IMR-90 (cell line): ENCODE measurements at regions of chr12 and their contacts with region 1.

Region 1: DNA sequence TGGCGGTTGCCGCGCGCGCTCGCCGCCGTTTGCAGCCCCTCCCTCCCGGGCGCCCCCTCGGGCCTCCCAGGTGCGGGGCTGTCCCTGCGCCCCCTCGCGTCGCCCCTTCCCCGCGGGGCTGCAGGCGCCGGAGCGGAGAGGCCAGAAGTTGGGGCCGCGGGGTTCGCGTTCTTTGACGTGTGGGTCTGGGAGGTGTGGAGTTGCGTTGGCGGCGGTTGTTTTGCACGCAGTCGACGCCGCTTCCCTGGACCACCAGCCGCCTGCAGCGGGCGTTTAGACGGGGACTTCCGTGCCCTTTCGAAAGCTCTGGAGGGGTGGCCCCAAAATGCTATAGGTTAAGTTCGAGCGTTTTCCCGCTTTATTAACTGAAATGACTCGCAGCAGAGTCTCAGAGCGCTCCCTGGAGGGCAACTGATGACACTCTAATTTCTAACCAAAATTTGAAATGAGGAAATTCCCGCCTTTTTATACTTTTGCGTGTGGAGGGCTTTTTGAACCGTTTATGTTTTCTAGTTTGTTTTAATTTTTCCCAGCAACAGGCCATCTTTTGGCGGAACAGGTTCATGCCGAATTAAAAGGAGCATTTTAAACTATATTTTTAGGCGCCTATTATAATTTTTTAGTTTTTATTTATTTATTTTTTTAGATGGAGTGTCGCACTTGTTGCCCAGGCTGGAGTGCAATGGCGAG is 939 bp downstream of the TMPO start:
- DNase-seq: peak; percentile 81
- ATAC-seq: peak; percentile 49
- H3K4me3 ChIP-seq: peak overlapping the region; percentile 93
- H3K27ac ChIP-seq: peak overlapping the region; percentile 84; the same call in 1 of the 2 replicates
- H3K4me1 ChIP-seq: no peaks in the 10 kb centered on the region
- H3K27me3 ChIP-seq: no peaks in the 10 kb centered on the region
- CTCF ChIP-seq: peak; percentile 82
- POLR2A ChIP-seq: peak; percentile 36; the same call in 1 of the 2 replicates
- RAD21 ChIP-seq: peak; percentile 80

Region 2: DNA sequence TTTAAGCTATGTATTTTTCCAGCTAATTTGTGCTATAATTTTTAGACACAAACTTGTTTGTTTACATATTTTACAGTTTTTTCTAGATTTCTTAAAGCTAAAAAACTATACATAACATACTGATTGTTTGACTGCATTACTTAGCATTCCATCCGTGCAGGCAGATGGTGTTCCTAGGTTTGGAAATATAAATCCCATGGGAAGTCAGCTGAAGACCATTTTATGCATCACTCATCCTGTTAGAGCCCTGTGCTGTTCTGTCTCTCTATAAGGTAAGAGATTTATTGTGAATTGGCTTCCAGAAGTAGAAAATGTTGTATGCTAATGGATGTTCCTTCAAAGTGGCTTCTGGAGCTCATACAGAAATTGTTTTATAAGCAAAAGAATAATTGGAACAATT is 1022.6 kb before region 1 on chr12:
- CTCF ChIA-PET with region 1: no interaction called
- POLR2A ChIA-PET with region 1: no interaction called
- dilution Hi-C with region 1: no loop called
- in situ Hi-C with region 1: no loop called
- intact Hi-C with region 1: no loop called
- DNase-seq: no peak
- ATAC-seq: no peak
- H3K4me3 ChIP-seq: no peak overlapping the region
- H3K27ac ChIP-seq: no peak overlapping the region
- H3K4me1 ChIP-seq: no peaks in the 10 kb centered on the region
- H3K27me3 ChIP-seq: no peaks in the 10 kb centered on the region
- CTCF ChIP-seq: no peak
- POLR2A ChIP-seq: no peak
- RAD21 ChIP-seq: no peak

Region 3: GRCh38 chr12:98424726-98425401 is 91.5 kb before region 1 on chr12:
- CTCF ChIA-PET with region 1: interaction called, 7 read pairs
- POLR2A ChIA-PET with region 1: no interaction called
- dilution Hi-C with region 1: no loop called
- in situ Hi-C with region 1: loop called (anchors 10 kb)
- intact Hi-C with region 1: loop called (anchors 1 kb)
- DNase-seq: peak; percentile 73
- ATAC-seq: peak; percentile 94
- H3K4me3 ChIP-seq: no peak overlapping the region
- H3K27ac ChIP-seq: no peak overlapping the region
- H3K4me1 ChIP-seq: peaks cover 2% of the 10 kb centered on the region; the same call in 1 of the 2 replicates
- H3K27me3 ChIP-seq: no peaks in the 10 kb centered on the region; the same call in 1 of the 2 replicates
- CTCF ChIP-seq: peak; percentile 75
- POLR2A ChIP-seq: no peak
- RAD21 ChIP-seq: peak; percentile 63

Region 4: GRCh38 chr12:98490501-98491453 is 25.6 kb before region 1 on chr12:
- CTCF ChIA-PET with region 1: interaction called, 6 read pairs
- POLR2A ChIA-PET with region 1: no interaction called
- dilution Hi-C with region 1: no loop called
- in situ Hi-C with region 1: no loop called
- intact Hi-C with region 1: loop called (anchors 1 kb)
- DNase-seq: peak; percentile 90
- ATAC-seq: peak; percentile 100
- H3K4me3 ChIP-seq: no peak overlapping the region
- H3K27ac ChIP-seq: peak overlapping the region; percentile 87
- H3K4me1 ChIP-seq: no peaks in the 10 kb centered on the region
- H3K27me3 ChIP-seq: no peaks in the 10 kb centered on the region
- CTCF ChIP-seq: peak; percentile 93
- POLR2A ChIP-seq: no peak
- RAD21 ChIP-seq: peak; percentile 68

Region 5: GRCh38 chr12:98503592-98504367 is 12.5 kb before region 1 on chr12:
- CTCF ChIA-PET with region 1: no interaction called
- POLR2A ChIA-PET with region 1: no interaction called
- dilution Hi-C with region 1: no loop called
- in situ Hi-C with region 1: no loop called
- intact Hi-C with region 1: loop called (anchors 1 kb)
- DNase-seq: peak; percentile 89
- ATAC-seq: peak; percentile 90
- H3K4me3 ChIP-seq: peak overlapping the region; percentile 72
- H3K27ac ChIP-seq: peak overlapping the region; percentile 93
- H3K4me1 ChIP-seq: no peaks in the 10 kb centered on the region
- H3K27me3 ChIP-seq: no peaks in the 10 kb centered on the region
- CTCF ChIP-seq: no peak
- POLR2A ChIP-seq: no peak
- RAD21 ChIP-seq: no peak

Region 6: GRCh38 chr12:98644711-98645402 is 128.5 kb after region 1 on chr12 and contains the starts of genes APAF1 and IKBIP:
- CTCF ChIA-PET with region 1: no interaction called
- POLR2A ChIA-PET with region 1: no interaction called
- dilution Hi-C with region 1: no loop called
- in situ Hi-C with region 1: no loop called
- intact Hi-C with region 1: loop called (anchors 10 kb)
- DNase-seq: peak; percentile 94
- ATAC-seq: peak; percentile 96
- H3K4me3 ChIP-seq: peak within 1 kb of the TSS; percentile 67
- H3K27ac ChIP-seq: peak within 1 kb of the TSS; percentile 69
- H3K4me1 ChIP-seq: no peaks in the 10 kb centered on the region; the same call in 1 of the 2 replicates
- H3K27me3 ChIP-seq: no peaks in the 10 kb centered on the region
- CTCF ChIP-seq: no peak
- POLR2A ChIP-seq: peak; percentile 86
- RAD21 ChIP-seq: no peak
- total RNA-seq, gene APAF1: 32.8 and 42.2 TPM in 2 replicates
- total RNA-seq, gene IKBIP: 37.1 and 88.3 TPM in 2 replicates